Activated CD4-positive, alpha-beta T cell treated with anti-CD3 and anti-CD28 coated beads for 36 hours (primary cell): ENCODE measurements at regions of chr3 and their contacts with region 1.

Region 1: GRCh38 chr3:18401300-18401961 is 23.7 kb downstream of the SATB1 start:
- DNase-seq: no peak
- ATAC-seq: peak; percentile 7
- H3K4me3 Mint-ChIP-seq: peak overlapping the region; percentile 46
- H3K27ac Mint-ChIP-seq: peak overlapping the region; percentile 80
- H3K4me1 Mint-ChIP-seq: peaks cover 95% of the 10 kb centered on the region
- H3K27me3 Mint-ChIP-seq: no peaks in the 10 kb centered on the region

Region 2: DNA sequence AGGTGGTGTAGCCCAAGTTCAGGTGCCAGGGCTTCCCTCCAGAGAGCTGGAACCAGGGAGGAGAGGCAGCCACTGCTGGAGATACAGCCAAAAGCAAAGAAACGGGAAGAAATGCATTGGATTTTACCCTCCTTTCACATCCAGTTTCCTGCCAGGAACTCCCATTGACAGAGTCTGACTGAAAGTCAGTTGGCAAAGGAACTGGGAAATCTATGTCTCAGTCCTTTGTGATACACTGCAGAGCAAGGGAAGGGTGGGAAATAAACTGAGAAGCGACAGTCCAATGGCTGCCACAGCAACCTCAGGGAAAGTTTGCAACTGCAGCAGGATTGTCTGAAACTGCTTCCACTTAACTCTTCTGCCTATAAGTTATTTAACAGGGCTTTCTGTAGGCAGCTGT is 118.9 kb before region 1 on chr3:
- CTCF ChIA-PET with region 1: no interaction called
- POLR2A ChIA-PET with region 1: no interaction called
- intact Hi-C with region 1: no loop called
- DNase-seq: no peak
- ATAC-seq: no peak
- H3K4me3 Mint-ChIP-seq: no peak overlapping the region
- H3K27ac Mint-ChIP-seq: no peak overlapping the region
- H3K4me1 Mint-ChIP-seq: no peaks in the 10 kb centered on the region
- H3K27me3 Mint-ChIP-seq: peaks cover 4% of the 10 kb centered on the region

Region 3: GRCh38 chr3:18389108-18389733 is 12.2 kb before region 1 on chr3:
- CTCF ChIA-PET with region 1: interaction called, 10 read pairs
- POLR2A ChIA-PET with region 1: interaction called, 5 read pairs
- intact Hi-C with region 1: loop called in 1 of 2 experiments (anchors 2 kb)
- DNase-seq: peak; percentile 31
- ATAC-seq: no peak
- H3K4me3 Mint-ChIP-seq: no peak overlapping the region
- H3K27ac Mint-ChIP-seq: peak overlapping the region; percentile 83
- H3K4me1 Mint-ChIP-seq: peaks cover 75% of the 10 kb centered on the region
- H3K27me3 Mint-ChIP-seq: no peaks in the 10 kb centered on the region

Region 4: DNA sequence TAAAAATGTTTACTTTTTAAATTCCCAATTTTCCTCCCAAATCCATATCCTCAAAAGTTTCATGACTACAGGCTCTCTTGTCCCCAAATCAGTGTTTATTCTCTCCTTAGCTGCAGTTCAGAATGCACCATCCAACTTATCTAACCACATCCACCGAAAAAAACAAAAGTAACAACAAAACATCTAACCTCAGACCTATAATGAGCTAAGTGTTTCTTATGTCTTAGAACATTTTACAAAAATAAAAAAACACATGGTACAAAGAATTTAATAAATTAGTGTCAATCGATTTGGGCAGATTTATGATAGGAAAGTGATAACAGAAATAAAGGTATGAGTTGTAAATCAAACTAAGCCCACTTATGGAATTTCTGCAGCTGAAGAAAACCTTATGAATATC is 10.1 kb after region 1 on chr3:
- CTCF ChIA-PET with region 1: interaction called, 8 read pairs
- POLR2A ChIA-PET with region 1: interaction called, 13 read pairs
- intact Hi-C with region 1: no loop called
- DNase-seq: no peak
- ATAC-seq: no peak
- H3K4me3 Mint-ChIP-seq: peak overlapping the region; percentile 57
- H3K27ac Mint-ChIP-seq: peak overlapping the region; percentile 90
- H3K4me1 Mint-ChIP-seq: peaks cover 91% of the 10 kb centered on the region
- H3K27me3 Mint-ChIP-seq: no peaks in the 10 kb centered on the region

Region 5: DNA sequence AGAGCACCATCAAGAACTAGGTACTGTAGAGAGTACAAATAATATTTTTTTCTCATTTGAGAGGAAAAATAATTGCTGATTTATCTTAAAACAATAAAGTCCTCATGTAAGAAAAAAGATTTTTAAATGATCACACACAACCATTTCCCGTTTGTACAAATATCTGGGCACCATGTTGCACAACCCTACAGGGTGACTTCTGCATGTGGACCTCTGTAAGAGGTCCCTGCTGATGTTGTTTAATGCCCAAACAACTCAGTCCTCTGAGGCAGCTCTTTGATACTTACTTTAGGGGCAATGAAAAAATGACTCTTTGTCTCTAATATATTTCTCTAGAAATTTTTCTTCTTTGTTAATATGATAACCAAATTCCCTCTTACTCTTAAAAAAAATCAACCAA is 191.8 kb after region 1 on chr3:
- CTCF ChIA-PET with region 1: no interaction called
- POLR2A ChIA-PET with region 1: no interaction called
- intact Hi-C with region 1: no loop called
- DNase-seq: no peak
- ATAC-seq: no peak
- H3K4me3 Mint-ChIP-seq: no peak overlapping the region
- H3K27ac Mint-ChIP-seq: no peak overlapping the region
- H3K4me1 Mint-ChIP-seq: no peaks in the 10 kb centered on the region
- H3K27me3 Mint-ChIP-seq: no peaks in the 10 kb centered on the region